Activated CD4-positive, alpha-beta memory T cell treated with anti-CD3 and anti-CD28 coated beads, Interleukin-2, amount 10 ng/mL, durations not matched to agents 7 days and 5 days (primary cell): ENCODE measurements at regions of chr19 and their contacts with region 1.

Region 1: GRCh38 chr19:45886427-45887199 is 672 bp upstream of the IRF2BP1 start:
- DNase-seq: peak; percentile 96
- H3K4me3 Mint-ChIP-seq: peak overlapping the region; percentile 84
- H3K27ac Mint-ChIP-seq: peak overlapping the region; percentile 91
- H3K4me1 Mint-ChIP-seq: peaks cover 29% of the 10 kb centered on the region
- H3K27me3 Mint-ChIP-seq: no peaks in the 10 kb centered on the region

Region 2: DNA sequence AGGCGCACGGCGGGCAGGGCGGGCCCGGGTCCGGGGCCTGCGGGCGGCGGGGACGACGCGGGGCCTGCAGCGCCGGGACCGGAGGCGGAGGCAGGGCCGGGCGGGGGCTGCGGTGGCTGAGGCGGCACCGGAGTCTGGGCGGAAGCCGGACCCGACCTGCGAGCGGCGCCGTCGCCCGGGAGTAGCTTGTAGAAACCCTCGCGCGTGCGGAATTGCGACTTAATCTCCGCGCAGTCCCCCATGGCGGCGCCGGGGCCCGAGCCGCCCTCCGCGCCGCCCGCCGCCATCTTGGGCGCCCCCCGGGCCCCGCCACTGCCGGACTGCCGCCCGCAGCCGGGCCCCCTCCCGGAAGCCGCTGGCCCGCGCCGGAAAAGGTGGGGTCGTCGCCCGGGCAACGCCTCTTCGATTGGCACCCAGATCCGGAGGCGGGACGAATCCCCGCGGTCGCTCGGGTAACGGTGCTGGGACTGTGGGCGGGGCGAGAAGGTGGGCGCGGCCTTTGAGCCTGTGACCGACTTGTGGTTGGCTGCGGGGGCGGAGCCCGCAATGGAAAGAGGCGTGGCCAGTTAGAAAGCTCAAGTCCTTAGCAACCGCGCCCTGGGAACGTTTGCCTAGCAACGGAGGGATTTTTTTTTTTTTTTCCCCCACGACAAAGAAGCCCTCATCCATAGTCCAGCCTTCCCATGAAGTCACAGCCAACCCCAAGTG is 94.0 kb before region 1 on chr19 and contains the start of gene DMWD:
- CTCF ChIA-PET with region 1: no interaction called
- POLR2A ChIA-PET with region 1: no interaction called
- DNase-seq: peak; percentile 100
- H3K4me3 Mint-ChIP-seq: peak within 1 kb of the TSS; percentile 96
- H3K27ac Mint-ChIP-seq: peak within 1 kb of the TSS; percentile 78
- H3K4me1 Mint-ChIP-seq: peaks cover 37% of the 10 kb centered on the region
- H3K27me3 Mint-ChIP-seq: peaks cover 53% of the 10 kb centered on the region
- total RNA-seq, gene DMWD: 63.1 to 65.4 TPM

Region 3: DNA sequence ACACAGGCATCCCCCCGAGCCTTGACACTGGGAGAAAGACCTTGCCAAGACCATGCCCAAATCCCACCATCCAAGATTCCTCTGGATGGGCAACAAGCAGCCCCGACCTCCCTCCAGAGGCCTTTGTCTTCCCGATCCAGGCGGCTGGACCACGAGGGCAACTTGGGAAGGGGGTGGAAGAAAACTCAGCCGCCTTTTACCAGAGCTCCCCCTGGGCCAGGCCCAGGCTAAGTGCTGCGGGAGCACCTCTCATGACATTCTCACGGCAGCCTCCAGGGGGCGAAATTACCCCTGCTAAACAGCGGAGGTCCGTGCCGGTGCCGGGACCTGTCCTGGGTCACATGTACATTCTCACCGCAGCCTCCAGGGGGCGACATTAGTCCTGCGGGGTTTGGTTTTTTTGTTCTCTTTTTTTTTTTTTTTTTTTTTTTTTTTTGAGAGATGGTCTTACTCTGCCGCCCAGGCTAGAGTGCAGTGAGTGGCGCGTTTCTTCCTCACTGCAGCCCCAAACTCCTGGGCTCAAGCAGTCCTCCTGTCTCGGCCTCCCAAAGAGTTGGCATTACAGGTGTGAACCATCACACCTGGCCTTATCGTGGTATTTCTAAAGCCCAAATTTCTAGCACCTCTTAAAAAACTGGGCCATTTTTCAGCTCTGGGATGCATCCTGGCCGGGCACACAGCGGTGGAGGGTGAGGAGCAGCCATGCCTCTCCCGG is 69.4 kb before region 1 on chr19:
- CTCF ChIA-PET with region 1: interaction called, 15 read pairs
- POLR2A ChIA-PET with region 1: interaction called, 3 read pairs
- DNase-seq: peak; percentile 96
- H3K4me3 Mint-ChIP-seq: no peak overlapping the region
- H3K27ac Mint-ChIP-seq: no peak overlapping the region
- H3K4me1 Mint-ChIP-seq: peaks cover 3% of the 10 kb centered on the region
- H3K27me3 Mint-ChIP-seq: no peaks in the 10 kb centered on the region

Region 4: GRCh38 chr19:45862564-45863334 is 23.9 kb before region 1 on chr19 and contains the start of gene SYMPK:
- CTCF ChIA-PET with region 1: interaction called, 22 read pairs
- POLR2A ChIA-PET with region 1: interaction called, 16 read pairs
- DNase-seq: peak; percentile 99
- H3K4me3 Mint-ChIP-seq: peak within 1 kb of the TSS; percentile 92
- H3K27ac Mint-ChIP-seq: peak within 1 kb of the TSS; percentile 96
- H3K4me1 Mint-ChIP-seq: peaks cover 36% of the 10 kb centered on the region
- H3K27me3 Mint-ChIP-seq: peaks cover 29% of the 10 kb centered on the region
- total RNA-seq, gene SYMPK: 88.3 to 89.2 TPM

Region 5: DNA sequence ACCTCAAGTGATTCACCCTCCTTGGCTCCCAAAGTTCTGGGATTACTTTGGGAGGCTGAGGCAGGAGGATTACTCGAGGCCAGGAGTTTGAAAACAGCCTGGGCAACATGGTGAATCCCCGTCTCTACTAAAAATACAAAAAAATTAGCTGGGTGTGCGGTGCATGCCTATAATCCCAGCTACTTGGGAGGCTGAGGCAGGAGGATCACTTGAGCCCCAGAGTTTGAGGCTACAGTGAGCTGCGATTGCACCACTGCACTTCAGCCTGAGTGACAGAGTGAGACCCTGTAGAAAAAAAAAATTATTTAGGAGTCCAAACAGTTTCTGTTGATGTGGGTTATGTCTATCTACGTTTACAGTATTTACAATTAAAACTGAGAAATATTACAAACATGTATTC is 15.8 kb before region 1 on chr19:
- CTCF ChIA-PET with region 1: interaction called, 14 read pairs
- POLR2A ChIA-PET with region 1: no interaction called
- DNase-seq: no peak
- H3K4me3 Mint-ChIP-seq: no peak overlapping the region
- H3K27ac Mint-ChIP-seq: no peak overlapping the region
- H3K4me1 Mint-ChIP-seq: no peaks in the 10 kb centered on the region
- H3K27me3 Mint-ChIP-seq: peaks cover 15% of the 10 kb centered on the region

Region 6: DNA sequence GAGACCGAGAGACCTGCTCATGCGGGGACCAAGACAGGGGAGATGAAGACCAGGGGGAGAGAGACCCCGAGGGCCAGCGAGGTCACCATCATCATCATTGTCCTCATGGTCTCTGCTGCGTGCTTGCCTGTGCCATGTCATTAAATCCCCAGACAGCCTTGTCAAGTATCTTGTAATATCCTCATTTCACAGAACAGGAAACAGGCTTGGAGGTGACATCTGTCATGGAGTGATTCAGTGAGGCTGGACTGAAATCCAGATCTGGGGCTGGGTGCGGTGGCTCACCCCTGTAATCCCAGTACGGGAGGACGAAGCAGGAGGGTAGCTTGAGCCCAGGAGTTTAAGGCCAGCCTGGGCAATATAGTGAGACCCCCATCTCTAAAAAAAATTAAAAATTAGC is 33.8 kb after region 1 on chr19:
- CTCF ChIA-PET with region 1: interaction called, 4 read pairs
- POLR2A ChIA-PET with region 1: interaction called, 12 read pairs
- DNase-seq: peak; percentile 31
- H3K4me3 Mint-ChIP-seq: peak overlapping the region; percentile 41
- H3K27ac Mint-ChIP-seq: peak overlapping the region; percentile 65
- H3K4me1 Mint-ChIP-seq: peaks cover 52% of the 10 kb centered on the region
- H3K27me3 Mint-ChIP-seq: peaks cover 7% of the 10 kb centered on the region